ENCODE measurements at regions of chr2 and their contacts with region 1.

Region 1: DNA sequence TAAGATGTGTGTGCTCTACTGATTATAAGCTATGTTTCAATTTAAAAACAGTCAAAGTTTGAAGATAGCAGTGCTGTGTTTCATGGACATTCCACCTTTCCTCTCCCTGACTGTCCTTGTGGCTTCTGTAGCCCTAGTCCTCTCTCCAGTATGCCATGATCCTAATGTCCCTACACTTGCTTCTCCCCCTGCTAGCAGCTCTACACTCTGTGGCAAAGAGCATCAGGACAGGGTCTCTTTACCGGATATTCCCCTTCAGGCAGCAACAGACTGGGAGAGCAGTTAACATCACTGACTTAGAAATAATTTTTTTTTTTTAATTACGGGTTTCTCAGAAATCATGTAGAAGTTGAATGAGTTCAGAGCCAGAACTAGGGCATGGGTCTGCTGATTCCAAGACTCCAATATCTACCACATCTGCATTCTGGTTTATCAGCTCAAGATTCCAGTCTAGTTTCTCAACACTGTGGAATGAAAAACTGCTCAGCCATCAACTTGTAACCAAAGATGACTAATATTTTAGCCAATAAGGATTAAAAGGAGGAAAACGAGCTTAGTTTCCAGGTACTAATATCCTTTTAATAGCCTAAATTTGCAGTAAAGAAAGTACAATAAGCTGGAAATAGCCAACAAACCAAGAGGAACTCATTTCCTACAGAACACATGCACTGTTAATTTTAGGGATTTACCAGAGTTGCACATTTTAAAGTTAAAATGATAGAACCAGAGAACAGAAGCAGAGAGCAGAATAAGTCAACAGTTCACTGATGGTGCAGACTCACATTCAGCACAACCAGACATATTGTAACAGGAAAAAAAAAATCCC is 45.2 kb downstream of the TMEM131 start:
- DNase-seq: peak; percentile 91
- ATAC-seq: peak; percentile 98
- H3K4me3 ChIP-seq: no peak overlapping the region
- H3K27ac ChIP-seq: peak overlapping the region; percentile 92
- H3K4me1 ChIP-seq: peaks cover 11% of the 10 kb centered on the region
- H3K27me3 ChIP-seq: no peaks in the 10 kb centered on the region
- CTCF ChIP-seq: no peak
- POLR2A ChIP-seq: no peak
- RAD21 ChIP-seq: no peak

Region 2: GRCh38 chr2:97870396-97870843 is 80.1 kb before region 1 on chr2:
- CTCF ChIA-PET with region 1: no interaction called
- POLR2A ChIA-PET with region 1: no interaction called
- dilution Hi-C with region 1: no loop called
- in situ Hi-C with region 1: no loop called
- intact Hi-C with region 1: loop called (anchors 5 kb)
- DNase-seq: peak; percentile 89
- ATAC-seq: peak; percentile 72
- H3K4me3 ChIP-seq: no peak overlapping the region
- H3K27ac ChIP-seq: peak overlapping the region; percentile 49
- H3K4me1 ChIP-seq: peaks cover 5% of the 10 kb centered on the region
- H3K27me3 ChIP-seq: no peaks in the 10 kb centered on the region
- CTCF ChIP-seq: no peak
- POLR2A ChIP-seq: no peak
- RAD21 ChIP-seq: peak; percentile 22; the same call in 1 of the 2 replicates

Region 3: GRCh38 chr2:97911206-97911921 is 39.2 kb before region 1 on chr2:
- CTCF ChIA-PET with region 1: no interaction called
- POLR2A ChIA-PET with region 1: no interaction called
- dilution Hi-C with region 1: no loop called
- in situ Hi-C with region 1: no loop called
- intact Hi-C with region 1: loop called (anchors 5 kb)
- DNase-seq: peak; percentile 58
- ATAC-seq: no peak
- H3K4me3 ChIP-seq: no peak overlapping the region
- H3K27ac ChIP-seq: no peak overlapping the region
- H3K4me1 ChIP-seq: peaks cover 10% of the 10 kb centered on the region
- H3K27me3 ChIP-seq: no peaks in the 10 kb centered on the region
- CTCF ChIP-seq: no peak
- POLR2A ChIP-seq: no peak
- RAD21 ChIP-seq: no peak

Region 4: GRCh38 chr2:97974471-97974870 is 23.9 kb after region 1 on chr2:
- CTCF ChIA-PET with region 1: no interaction called
- POLR2A ChIA-PET with region 1: no interaction called
- dilution Hi-C with region 1: no loop called
- in situ Hi-C with region 1: no loop called
- intact Hi-C with region 1: no loop called
- DNase-seq: no peak
- ATAC-seq: no peak
- H3K4me3 ChIP-seq: no peak overlapping the region
- H3K27ac ChIP-seq: no peak overlapping the region
- H3K4me1 ChIP-seq: peaks cover 5% of the 10 kb centered on the region
- H3K27me3 ChIP-seq: no peaks in the 10 kb centered on the region
- CTCF ChIP-seq: no peak
- POLR2A ChIP-seq: no peak
- RAD21 ChIP-seq: no peak